Spleen (tissue), 13 donors: ENCODE measurements at regions of chr9 and their contacts with region 1.

Region 1: GRCh38 chr9:88578121-88579054 is 43.4 kb downstream of the NXNL2 start:
- DNase-seq: peak; percentile 94
- H3K4me3 ChIP-seq: peak overlapping the region in 1 of 8 donors; percentile 35
- H3K27ac ChIP-seq: no peak overlapping the region
- H3K4me1 ChIP-seq: peaks cover 0 to 11% (median 7%) of the 10 kb centered on the region in 6 donors
- H3K27me3 ChIP-seq: peaks cover 0 to 16% (median 0%) of the 10 kb centered on the region in 7 donors
- CTCF ChIP-seq: peak; percentile 73 to 96 (median 90)
- POLR2A ChIP-seq: no peak

Region 2: GRCh38 chr9:87678650-87679515 is 899.5 kb before region 1 on chr9:
- intact Hi-C with region 1: loop called (anchors 10 kb)
- DNase-seq: no peak
- H3K4me3 ChIP-seq: no peak overlapping the region
- H3K27ac ChIP-seq: no peak overlapping the region
- H3K4me1 ChIP-seq: peaks cover 0 to 5% (median 0%) of the 10 kb centered on the region in 6 donors
- H3K27me3 ChIP-seq: no peaks in the 10 kb centered on the region
- CTCF ChIP-seq: peak; percentile 17 to 74 (median 62)
- POLR2A ChIP-seq: no peak

Region 3: GRCh38 chr9:88173378-88173999 is 404.9 kb before region 1 on chr9:
- intact Hi-C with region 1: loop called (anchors 10 kb)
- DNase-seq: no peak
- H3K4me3 ChIP-seq: no peak overlapping the region
- H3K27ac ChIP-seq: no peak overlapping the region
- H3K4me1 ChIP-seq: no peaks in the 10 kb centered on the region
- H3K27me3 ChIP-seq: no peaks in the 10 kb centered on the region
- CTCF ChIP-seq: peak; percentile 28 to 70 (median 58)
- POLR2A ChIP-seq: no peak